Left colon (tissue), 2 donors: ENCODE measurements at regions of chr2 and their contacts with region 1.

Region 1: DNA sequence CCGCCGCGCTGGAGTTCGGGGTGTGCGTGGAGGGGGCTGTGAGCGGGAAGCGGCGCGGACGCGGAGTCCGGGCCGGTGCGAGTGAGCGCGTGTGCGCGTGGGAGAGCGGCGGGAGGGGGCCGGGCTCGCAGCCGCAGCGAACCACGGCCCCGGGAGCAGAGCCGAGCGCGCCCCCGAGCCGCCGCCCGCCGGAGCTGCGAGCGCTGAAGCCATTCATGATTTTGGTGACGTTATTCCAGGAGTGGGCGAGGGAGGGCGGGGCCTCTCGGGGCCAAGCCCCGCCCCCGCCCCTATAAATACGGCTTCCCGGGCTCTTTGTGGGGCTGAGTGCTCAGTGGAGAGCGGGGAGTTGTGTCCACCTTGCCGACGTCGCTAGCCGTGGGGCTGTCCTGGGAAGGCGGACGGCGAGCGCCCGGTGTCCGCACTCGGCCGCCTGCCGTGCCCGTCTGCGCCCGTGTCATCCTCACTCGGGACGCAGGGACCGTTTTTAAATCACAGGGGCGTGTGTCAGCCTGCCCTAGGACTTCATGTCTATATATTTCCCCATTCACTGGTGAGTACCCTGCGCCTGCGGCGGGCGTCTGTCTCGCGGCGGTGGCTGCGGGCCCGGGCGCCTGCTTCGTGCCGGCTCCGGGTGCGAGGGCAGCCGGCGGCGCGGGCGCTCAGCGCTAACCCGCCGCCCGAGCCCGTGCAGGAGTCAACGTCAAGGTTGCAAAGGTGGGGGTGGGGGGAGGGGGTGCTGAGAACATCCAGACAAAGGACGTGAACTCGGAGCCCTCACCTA is at the start of gene LBH:
- DNase-seq: peak; percentile 67 to 80
- ATAC-seq: peak; percentile 70
- total RNA-seq, gene LBH: 7.5 to 14.5 TPM

Region 2: DNA sequence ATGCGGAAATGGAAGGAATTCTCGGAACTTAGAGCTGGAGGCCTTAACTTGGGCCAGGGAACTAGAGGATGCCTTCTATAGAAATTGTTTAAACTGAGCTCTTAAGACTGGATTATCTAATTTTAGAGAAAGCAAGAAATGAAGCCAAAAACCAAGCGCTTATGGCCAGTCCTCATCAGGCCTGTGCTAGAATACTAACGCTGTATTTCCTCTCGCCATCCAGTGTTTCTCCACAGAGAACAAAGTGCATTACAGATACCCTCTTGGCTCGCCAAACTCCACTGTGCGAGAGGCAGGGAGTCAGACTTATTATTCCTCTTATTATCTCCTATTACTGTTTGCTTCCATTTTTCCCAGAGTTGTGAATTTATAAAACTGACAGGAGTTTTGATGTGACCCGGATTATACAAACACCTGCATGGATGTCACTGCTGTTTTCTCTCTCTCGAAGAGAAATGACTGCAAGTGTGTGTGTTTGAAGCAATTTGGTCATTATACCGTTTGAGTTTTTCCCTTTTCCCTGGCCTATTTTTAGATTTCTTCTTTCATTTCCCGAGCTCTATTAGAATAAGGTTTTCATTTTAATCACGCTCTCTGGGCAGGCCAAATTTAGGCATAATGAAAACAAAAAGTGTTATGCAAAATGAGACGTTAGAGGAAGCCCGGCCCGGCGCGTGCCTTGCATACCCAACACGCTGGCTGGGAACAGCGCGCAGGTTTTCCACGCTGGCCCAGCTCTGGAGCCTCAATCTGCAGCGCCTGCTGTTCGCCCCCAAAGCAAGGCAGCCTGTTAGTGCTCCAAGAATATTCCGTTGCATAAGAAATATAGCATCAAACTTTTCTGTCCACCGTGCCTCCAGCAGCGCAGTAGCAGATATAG is 413.4 kb before region 1 on chr2:
- intact Hi-C with region 1: no loop called
- DNase-seq: no peak
- ATAC-seq: no peak

Region 3: GRCh38 chr2:30404319-30404953 is 173.0 kb after region 1 on chr2:
- intact Hi-C with region 1: loop called in 1 of 2 experiments (anchors 10 kb)
- DNase-seq: peak in 1 of 2 donors; percentile 31
- ATAC-seq: no peak